Activated CD4-positive, alpha-beta T cell treated with anti-CD3 and anti-CD28 coated beads, Interleukin-2, amount 10 ng/mL, durations not matched to agents 7 days and 5 days (primary cell): ENCODE measurements at regions of chr6 and their contacts with region 1.

Region 1: DNA sequence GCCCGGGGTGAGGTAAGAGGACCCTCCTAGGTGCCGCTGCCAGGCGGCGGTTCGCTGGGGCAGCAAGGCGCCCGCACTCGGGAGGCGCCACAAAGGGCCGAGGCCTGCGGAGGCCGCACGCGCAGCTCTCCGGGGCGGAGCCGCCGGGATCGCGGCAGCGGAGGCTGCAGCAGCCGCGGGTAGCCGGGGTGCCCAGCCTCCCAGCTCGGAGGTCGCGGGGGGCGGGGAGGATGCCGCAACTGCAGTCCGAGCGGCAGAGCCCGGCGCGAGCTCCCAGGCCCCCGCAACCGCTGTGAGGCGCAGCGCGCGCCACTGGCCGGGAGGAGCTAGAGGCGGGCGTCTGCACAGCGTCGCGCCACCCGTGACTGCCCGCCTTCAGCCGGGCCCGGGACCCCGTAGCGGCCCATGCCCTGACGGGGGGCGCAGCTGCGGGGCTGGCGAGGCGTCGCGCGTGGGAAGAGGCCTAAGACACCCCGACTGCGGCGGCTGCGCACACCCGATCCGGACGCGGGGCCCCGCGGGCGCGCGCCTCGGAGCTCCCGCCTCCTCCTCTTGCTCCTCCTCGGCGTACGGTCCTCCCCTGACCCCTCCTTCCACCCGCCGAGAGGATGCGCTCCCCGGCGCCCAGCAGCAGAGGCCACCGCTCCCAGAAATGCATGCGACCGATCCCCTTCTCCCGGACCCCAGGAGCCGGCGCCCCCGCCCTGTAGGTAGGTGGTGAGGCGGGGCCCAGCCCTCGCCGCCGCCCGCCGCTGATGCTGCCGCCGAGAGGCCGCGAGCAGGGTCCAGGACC is at the start of gene NCOA7:
- DNase-seq: peak; percentile 82
- H3K4me3 Mint-ChIP-seq: peak within 1 kb of the TSS; percentile 90
- H3K27ac Mint-ChIP-seq: peak within 1 kb of the TSS; percentile 100
- H3K4me1 Mint-ChIP-seq: peaks cover 51% of the 10 kb centered on the region
- H3K27me3 Mint-ChIP-seq: no peaks in the 10 kb centered on the region
- total RNA-seq, gene NCOA7: 43.2 to 53.1 TPM

Region 2: DNA sequence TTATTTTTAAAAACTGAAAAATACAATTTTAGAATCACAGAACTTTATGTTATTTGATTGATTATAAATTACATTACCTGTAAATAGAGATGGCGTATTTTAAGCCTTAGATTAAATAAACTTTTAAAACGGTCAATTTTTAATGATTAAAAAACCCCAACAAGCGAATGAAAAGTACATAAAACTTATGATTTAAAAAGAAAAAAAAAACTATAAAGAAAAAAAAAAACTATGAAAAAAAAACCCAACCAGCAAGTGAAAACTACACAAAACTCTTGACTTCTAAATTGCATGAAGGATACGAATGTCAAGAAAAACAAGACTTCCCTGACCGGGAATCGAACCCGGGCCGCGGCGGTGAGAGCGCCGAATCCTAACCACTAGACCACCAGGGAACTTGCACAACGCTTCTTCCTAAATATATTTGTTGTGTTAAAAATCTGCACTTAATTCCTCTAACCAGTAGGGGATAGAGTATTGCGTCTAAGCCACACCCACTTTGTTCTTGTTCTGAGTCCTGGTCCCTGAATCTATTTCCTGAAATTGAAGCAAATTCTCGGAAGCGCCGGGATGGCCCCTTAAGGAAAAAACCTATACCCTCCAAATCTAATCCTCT is 10.5 kb before region 1 on chr6:
- CTCF ChIA-PET with region 1: interaction called, 47 read pairs
- POLR2A ChIA-PET with region 1: interaction called, 19 read pairs
- DNase-seq: peak; percentile 82
- H3K4me3 Mint-ChIP-seq: no peak overlapping the region
- H3K27ac Mint-ChIP-seq: no peak overlapping the region
- H3K4me1 Mint-ChIP-seq: peaks cover 18% of the 10 kb centered on the region
- H3K27me3 Mint-ChIP-seq: peaks cover 19% of the 10 kb centered on the region

Region 3: GRCh38 chr6:125802943-125803377 is 12.4 kb after region 1 on chr6:
- CTCF ChIA-PET with region 1: interaction called, 14 read pairs
- POLR2A ChIA-PET with region 1: interaction called, 3 read pairs
- DNase-seq: no peak
- H3K4me3 Mint-ChIP-seq: no peak overlapping the region
- H3K27ac Mint-ChIP-seq: no peak overlapping the region
- H3K4me1 Mint-ChIP-seq: peaks cover 47% of the 10 kb centered on the region
- H3K27me3 Mint-ChIP-seq: no peaks in the 10 kb centered on the region

Region 4: GRCh38 chr6:125931733-125932450 is 141.3 kb after region 1 on chr6:
- CTCF ChIA-PET with region 1: no interaction called
- POLR2A ChIA-PET with region 1: no interaction called
- DNase-seq: no peak
- H3K4me3 Mint-ChIP-seq: no peak overlapping the region
- H3K27ac Mint-ChIP-seq: no peak overlapping the region
- H3K4me1 Mint-ChIP-seq: peaks cover 9% of the 10 kb centered on the region
- H3K27me3 Mint-ChIP-seq: peaks cover 2% of the 10 kb centered on the region